Heart right ventricle (tissue), 16 donors: ENCODE measurements at regions of chr4 and their contacts with region 1.

Region 1: DNA sequence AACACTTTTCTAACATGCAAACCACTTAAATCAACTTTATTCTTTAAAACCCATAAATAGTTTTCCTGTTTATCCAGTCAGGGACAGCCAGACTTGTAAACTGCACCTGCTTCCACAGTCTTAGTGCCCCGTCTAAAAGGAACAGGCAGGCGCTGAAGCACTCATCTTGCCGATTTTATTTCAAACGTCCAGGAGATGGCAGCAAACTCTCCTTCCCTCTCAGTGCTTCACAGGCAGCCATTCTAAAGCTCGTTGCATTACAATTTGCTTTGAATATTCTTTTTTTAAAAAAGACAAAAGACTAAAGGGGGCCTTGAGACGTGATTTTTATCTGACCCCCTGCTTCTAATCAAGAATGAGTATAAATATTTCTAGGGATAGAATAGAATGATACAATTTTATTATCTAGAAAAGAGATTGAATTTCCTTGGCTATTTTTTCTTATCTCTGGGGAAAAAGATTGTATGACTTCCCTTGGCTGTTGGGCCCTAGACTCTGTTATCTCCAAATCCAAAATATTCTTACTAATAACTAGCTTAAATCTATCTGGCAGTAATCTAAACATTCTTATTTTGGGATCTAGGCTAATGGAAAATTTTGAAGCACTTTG is 93.6 kb upstream of the MYOZ2 start:
- DNase-seq: peak in 1 of 2 donors; percentile 71
- ATAC-seq: peak; percentile 49 to 80 (median 64)
- H3K4me3 ChIP-seq: no peak overlapping the region
- H3K27ac ChIP-seq: peak overlapping the region in 8 of 10 donors; percentile 51 to 72 (median 63)
- H3K4me1 ChIP-seq: peaks cover 5 to 91% (median 75%) of the 10 kb centered on the region in 9 donors
- H3K27me3 ChIP-seq: no peaks in the 10 kb centered on the region
- CTCF ChIP-seq: peak; percentile 47 to 82 (median 66)

Region 2: GRCh38 chr4:118757761-118758251 is 284.2 kb before region 1 on chr4:
- intact Hi-C with region 1: loop called in 1 of 10 experiments (anchors 10 kb)
- DNase-seq: no peak
- ATAC-seq: peak in 7 of 8 donors; percentile 33 to 78 (median 62)
- H3K4me3 ChIP-seq: no peak overlapping the region
- H3K27ac ChIP-seq: peak overlapping the region in 9 of 10 donors; percentile 40 to 77 (median 65)
- H3K4me1 ChIP-seq: peaks cover 5 to 99% (median 93%) of the 10 kb centered on the region in 9 donors
- H3K27me3 ChIP-seq: no peaks in the 10 kb centered on the region
- CTCF ChIP-seq: no peak

Region 3: GRCh38 chr4:119080716-119081541 is 38.9 kb after region 1 on chr4:
- intact Hi-C with region 1: loop called in 1 of 10 experiments (anchors 5 kb)
- DNase-seq: no peak
- ATAC-seq: peak in 3 of 8 donors; percentile 23 to 56 (median 33)
- H3K4me3 ChIP-seq: no peak overlapping the region
- H3K27ac ChIP-seq: peak overlapping the region in 6 of 10 donors; percentile 10 to 70 (median 38)
- H3K4me1 ChIP-seq: peaks cover 0 to 16% (median 8%) of the 10 kb centered on the region in 9 donors
- H3K27me3 ChIP-seq: no peaks in the 10 kb centered on the region
- CTCF ChIP-seq: no peak

Region 4: DNA sequence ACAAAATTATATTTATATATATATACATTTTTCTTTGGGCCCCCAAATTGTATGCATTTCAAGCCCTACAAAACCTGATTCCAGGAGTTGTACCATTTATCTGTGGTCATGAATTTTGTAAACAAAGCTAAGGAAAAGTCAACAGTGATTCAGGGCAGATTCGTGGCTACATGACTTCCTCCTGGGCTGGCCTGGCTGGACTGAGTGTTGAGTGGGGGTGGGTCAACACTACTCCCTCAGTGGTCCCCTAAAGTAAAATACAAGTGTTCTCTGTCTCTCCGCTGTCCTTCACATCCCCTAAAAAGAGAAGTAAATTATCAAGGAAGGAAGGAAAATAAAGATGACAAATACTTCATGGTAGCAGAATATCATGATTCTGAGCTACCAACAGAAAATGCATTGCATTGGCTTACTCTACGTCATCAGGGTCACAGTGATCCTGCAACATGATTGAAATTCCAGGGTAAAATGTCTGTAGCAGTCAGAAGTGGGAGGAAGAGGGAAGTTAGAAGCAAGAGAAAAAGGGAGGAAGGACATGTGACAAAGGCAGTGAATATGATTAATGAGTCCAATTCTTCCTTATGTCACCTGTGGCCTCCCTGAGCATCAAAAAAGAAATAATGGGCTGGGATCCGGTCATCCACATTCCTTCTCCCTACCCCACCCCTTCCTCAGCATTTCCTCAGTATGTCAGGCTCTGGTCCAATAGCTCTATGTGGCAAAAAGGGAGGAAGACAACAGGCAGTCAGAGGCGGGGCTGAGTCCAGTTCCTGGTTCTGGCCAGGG is 51.2 kb after region 1 on chr4:
- intact Hi-C with region 1: no loop called
- DNase-seq: no peak
- ATAC-seq: peak in 6 of 8 donors; percentile 22 to 79 (median 68)
- H3K4me3 ChIP-seq: no peak overlapping the region
- H3K27ac ChIP-seq: peak overlapping the region in 1 of 10 donors; percentile 32
- H3K4me1 ChIP-seq: peaks cover 0 to 18% (median 5%) of the 10 kb centered on the region in 9 donors
- H3K27me3 ChIP-seq: no peaks in the 10 kb centered on the region
- CTCF ChIP-seq: no peak

Region 5: GRCh38 chr4:119138046-119138445 is 96.0 kb after region 1 on chr4:
- intact Hi-C with region 1: loop called in 7 of 10 experiments (anchors 5 to 10 kb)
- DNase-seq: no peak
- ATAC-seq: peak in 6 of 8 donors; percentile 35 to 76 (median 70)
- H3K4me3 ChIP-seq: peak overlapping the region; percentile 11 to 60 (median 47)
- H3K27ac ChIP-seq: peak overlapping the region in 9 of 10 donors; percentile 75 to 93 (median 87)
- H3K4me1 ChIP-seq: peaks cover 0 to 29% (median 16%) of the 10 kb centered on the region in 9 donors
- H3K27me3 ChIP-seq: no peaks in the 10 kb centered on the region
- CTCF ChIP-seq: no peak

Region 6: DNA sequence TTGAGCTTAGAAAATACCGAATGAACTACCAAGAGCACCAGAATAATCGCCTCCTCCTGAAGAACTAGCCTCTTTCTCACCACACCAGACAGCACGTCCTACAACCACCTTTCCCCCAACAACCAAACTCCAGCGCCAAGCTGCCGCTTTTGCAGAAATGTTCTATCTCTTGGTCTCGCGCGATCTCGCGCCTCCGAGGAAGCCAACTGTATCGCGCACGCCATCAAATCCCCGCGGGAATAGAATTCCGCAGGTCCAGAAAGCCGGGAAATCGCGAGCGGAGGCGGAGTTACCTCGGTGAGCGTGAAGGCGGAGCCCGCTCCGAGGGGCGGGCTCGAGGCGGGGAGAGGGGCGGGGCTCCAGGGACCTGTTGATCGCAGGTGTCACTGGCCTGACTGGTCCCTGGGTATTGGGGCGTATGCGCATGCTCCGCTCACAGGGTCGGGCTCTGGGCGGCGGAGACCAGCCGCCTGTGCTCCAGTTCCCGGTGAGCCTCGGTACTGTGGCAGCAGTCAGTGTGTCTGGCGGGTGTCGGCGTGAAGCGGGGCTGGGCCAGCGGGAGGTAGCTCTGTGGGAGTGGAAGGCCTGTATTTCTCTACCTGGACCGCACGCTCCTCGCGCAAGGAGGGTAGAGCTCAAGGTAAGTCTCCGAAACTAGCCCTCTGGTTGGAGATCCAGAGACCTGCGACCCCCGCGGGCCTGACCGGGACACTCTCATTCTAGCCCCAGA is 170.3 kb after region 1 on chr4 and contains the start of gene USP53:
- intact Hi-C with region 1: loop called in 4 of 10 experiments (anchors 5 to 10 kb)
- DNase-seq: peak; percentile 96 to 97
- ATAC-seq: peak; percentile 96 to 99 (median 98)
- H3K4me3 ChIP-seq: peak within 1 kb of the TSS; percentile 69 to 93 (median 82)
- H3K27ac ChIP-seq: peak within 1 kb of the TSS; percentile 92 to 97 (median 96)
- H3K4me1 ChIP-seq: peaks cover 0 to 44% (median 19%) of the 10 kb centered on the region in 9 donors
- H3K27me3 ChIP-seq: no peaks in the 10 kb centered on the region
- CTCF ChIP-seq: peak in 1 of 9 donors; percentile 5
- total RNA-seq, gene USP53: 26.4 to 64.6 (median 41.8) TPM